ENCODE measurements at regions of chr16 and their contacts with region 1.

Region 1: GRCh38 chr16:67226804-67227557 is at the start of gene TMEM208:
- DNase-seq: peak; percentile 99
- ATAC-seq: peak; percentile 96
- H3K4me3 ChIP-seq: peak within 1 kb of the TSS; percentile 97 to 100 (median 98)
- H3K27ac ChIP-seq: peak within 1 kb of the TSS; percentile 55
- H3K4me1 ChIP-seq: peaks cover 34% of the 10 kb centered on the region
- H3K27me3 ChIP-seq: peaks cover 0 to 4% of the 10 kb centered on the region in 2 experiments; a peak in 1 of 5 replicates
- CTCF ChIP-seq: peak; percentile 61
- EP300 ChIP-seq: peak; percentile 30 to 45; a peak in 2 of 4 replicates
- POLR2A ChIP-seq: peak; percentile 90 to 95
- RAD21 ChIP-seq: peak; percentile 45
- total RNA-seq, gene TMEM208: 50.6 and 72.9 TPM in 2 replicates

Region 2: GRCh38 chr16:67052399-67052798 is 174.6 kb before region 1 on chr16:
- CTCF ChIA-PET with region 1: no interaction called
- POLR2A ChIA-PET with region 1: no interaction called
- in situ Hi-C with region 1: no loop called
- intact Hi-C with region 1: no loop called
- DNase-seq: no peak
- ATAC-seq: no peak
- H3K4me3 ChIP-seq: no peak overlapping the region
- H3K27ac ChIP-seq: no peak overlapping the region
- H3K4me1 ChIP-seq: peaks cover 11% of the 10 kb centered on the region; the same call in 1 of the 2 replicates
- H3K27me3 ChIP-seq: no peaks in the 10 kb centered on the region; a peak in 1 of 5 replicates
- CTCF ChIP-seq: no peak
- EP300 ChIP-seq: no peak
- POLR2A ChIP-seq: no peak
- RAD21 ChIP-seq: no peak

Region 3: DNA sequence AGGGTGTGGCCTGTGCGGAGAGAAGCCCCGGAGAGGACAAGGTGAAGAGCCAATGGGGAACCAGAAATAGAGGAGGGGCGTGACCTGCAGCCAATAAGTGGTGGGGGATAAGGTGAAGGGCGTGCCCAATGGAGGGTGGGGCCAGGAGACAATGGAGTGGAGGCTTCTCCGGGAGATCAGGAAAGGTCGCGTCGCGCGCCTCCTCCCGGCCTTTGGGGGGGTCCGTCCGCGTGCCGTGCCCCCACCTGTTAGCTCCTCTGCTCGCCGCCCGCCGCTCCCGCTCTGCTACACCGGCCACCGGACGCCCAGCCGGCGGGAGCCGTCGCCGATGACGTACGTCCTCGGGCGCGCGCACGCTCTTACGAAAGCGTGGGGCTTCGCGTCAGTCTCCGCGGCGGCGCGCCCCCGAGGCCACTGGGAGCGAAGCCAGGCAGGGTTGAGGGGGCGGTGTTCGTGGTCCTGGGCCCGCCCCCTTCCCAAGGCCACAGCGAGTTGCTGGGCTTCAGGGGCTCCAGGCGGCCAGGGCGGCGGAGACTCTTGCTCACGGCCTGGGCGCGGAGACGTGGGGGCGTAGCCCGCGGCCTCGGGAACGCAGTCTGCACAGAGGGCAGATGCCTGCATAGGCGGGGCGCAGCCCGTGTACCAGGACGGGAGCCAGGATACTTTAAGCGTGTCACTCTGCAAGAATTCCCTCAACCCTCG is 43.2 kb before region 1 on chr16 and contains the start of gene MATCAP1:
- CTCF ChIA-PET with region 1: no interaction called
- POLR2A ChIA-PET with region 1: interaction called, 9 read pairs
- in situ Hi-C with region 1: no loop called
- intact Hi-C with region 1: loop called (anchors 5 kb)
- DNase-seq: peak; percentile 99
- ATAC-seq: peak; percentile 84
- H3K4me3 ChIP-seq: peak within 1 kb of the TSS; percentile 72 to 98 (median 82)
- H3K27ac ChIP-seq: peak within 1 kb of the TSS; percentile 82
- H3K4me1 ChIP-seq: peaks cover 48% of the 10 kb centered on the region
- H3K27me3 ChIP-seq: peaks cover 5 to 7% of the 10 kb centered on the region in 2 experiments; a peak in 2 of 5 replicates
- CTCF ChIP-seq: peak; percentile 45
- EP300 ChIP-seq: 0 out of 4 replicates have a peak, but pooled peaks of 1 of the 2 experiments have one; percentile 6
- POLR2A ChIP-seq: peak in 1 of 2 experiments; percentile 67; a peak in 2 of 4 replicates
- RAD21 ChIP-seq: no peak
- total RNA-seq, gene MATCAP1: 4.4 and 11.2 TPM in 2 replicates

Region 4: GRCh38 chr16:67210069-67210937 is 16.7 kb before region 1 on chr16:
- CTCF ChIA-PET with region 1: no interaction called
- POLR2A ChIA-PET with region 1: interaction called, 17 read pairs
- in situ Hi-C with region 1: no loop called
- intact Hi-C with region 1: no loop called
- DNase-seq: peak; percentile 33
- ATAC-seq: peak; percentile 68
- H3K4me3 ChIP-seq: no peak overlapping the region; a peak in 1 of 6 replicates
- H3K27ac ChIP-seq: no peak overlapping the region
- H3K4me1 ChIP-seq: peaks cover 71% of the 10 kb centered on the region
- H3K27me3 ChIP-seq: no peaks in the 10 kb centered on the region
- CTCF ChIP-seq: peak; percentile 38; the same call in 1 of the 2 replicates
- EP300 ChIP-seq: no peak
- POLR2A ChIP-seq: no peak
- RAD21 ChIP-seq: peak; percentile 73

Region 5: GRCh38 chr16:67393035-67393787 is 166.2 kb after region 1 on chr16 and contains the start of gene TPPP3:
- CTCF ChIA-PET with region 1: no interaction called
- POLR2A ChIA-PET with region 1: no interaction called
- in situ Hi-C with region 1: no loop called
- intact Hi-C with region 1: no loop called
- DNase-seq: peak; percentile 77
- ATAC-seq: peak; percentile 74
- H3K4me3 ChIP-seq: peak within 1 kb of the TSS; percentile 9 to 73 (median 31); a peak in 4 of 6 replicates
- H3K27ac ChIP-seq: no peak within 1 kb of the TSS
- H3K4me1 ChIP-seq: peaks cover 44% of the 10 kb centered on the region
- H3K27me3 ChIP-seq: peaks cover 6 to 65% of the 10 kb centered on the region in 2 experiments; a peak in 4 of 5 replicates
- CTCF ChIP-seq: peak; percentile 79
- EP300 ChIP-seq: peak in 1 of 2 experiments; percentile 42; a peak in 1 of 4 replicates
- POLR2A ChIP-seq: peak in 1 of 2 experiments; percentile 24; a peak in 1 of 4 replicates
- RAD21 ChIP-seq: peak; percentile 80
- total RNA-seq, gene TPPP3: 0.20 and 0.44 TPM in 2 replicates

Measured in HepG2 (cell line).